Activated naive CD4-positive, alpha-beta T cell treated with anti-CD3 and anti-CD28 coated beads for 36 hours (primary cell): ENCODE measurements at regions of chr12 and their contacts with region 1.

Region 1: DNA sequence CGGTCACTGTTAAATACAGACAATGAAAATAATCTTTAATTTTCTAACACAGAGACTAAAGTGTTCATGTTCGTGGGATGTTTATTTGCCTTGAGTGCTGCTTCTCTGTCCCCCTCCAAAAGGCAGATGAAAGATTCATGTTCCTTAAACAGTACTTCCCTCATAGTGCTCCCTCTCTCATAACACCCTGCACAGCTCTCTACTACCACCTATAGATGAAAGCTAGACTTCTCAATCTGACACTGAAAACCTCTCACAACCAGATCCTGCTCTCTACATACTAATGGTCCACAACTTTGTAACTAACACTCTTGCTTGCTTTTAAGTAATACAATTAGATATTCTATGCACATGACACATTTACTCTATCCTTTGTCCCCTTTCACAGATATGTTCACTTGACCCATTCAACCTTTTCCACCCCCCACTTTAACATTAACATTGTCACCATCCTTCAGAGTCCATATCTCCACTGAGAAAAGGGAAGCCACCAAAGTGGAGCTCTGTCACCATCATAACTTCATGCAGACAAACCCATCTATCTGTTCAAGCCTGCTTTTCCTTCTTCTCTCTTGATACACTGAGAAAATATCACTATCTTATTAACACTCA is 266.4 kb upstream of the USP15 start:
- DNase-seq: no peak
- H3K4me3 Mint-ChIP-seq: no peak overlapping the region
- H3K27ac Mint-ChIP-seq: no peak overlapping the region
- H3K4me1 Mint-ChIP-seq: no peaks in the 10 kb centered on the region
- H3K27me3 Mint-ChIP-seq: no peaks in the 10 kb centered on the region

Region 2: DNA sequence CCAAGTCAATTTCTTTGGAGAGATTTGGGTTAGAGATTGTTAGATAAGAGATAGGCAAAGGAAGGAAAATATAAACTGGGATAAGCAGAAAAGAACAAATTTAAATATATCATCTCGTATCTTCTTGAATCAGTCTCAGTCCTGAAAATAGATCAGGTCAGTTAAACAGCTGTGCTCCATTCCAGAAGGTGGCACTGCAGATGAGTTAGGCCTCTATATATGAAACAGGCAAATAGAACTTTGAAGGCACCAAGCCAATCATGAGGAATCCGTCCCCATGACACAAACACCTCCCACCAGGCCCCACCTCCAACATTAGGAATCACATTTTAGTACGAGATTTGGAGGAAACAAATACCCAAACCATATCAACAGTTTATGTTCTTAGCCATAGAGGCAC is 339.1 kb before region 1 on chr12:
- CTCF ChIA-PET with region 1: no interaction called
- intact Hi-C with region 1: loop called (anchors 5 kb)
- DNase-seq: peak; percentile 7
- H3K4me3 Mint-ChIP-seq: no peak overlapping the region
- H3K27ac Mint-ChIP-seq: no peak overlapping the region
- H3K4me1 Mint-ChIP-seq: no peaks in the 10 kb centered on the region
- H3K27me3 Mint-ChIP-seq: no peaks in the 10 kb centered on the region

Region 3: GRCh38 chr12:61916831-61917230 is 77.0 kb before region 1 on chr12:
- CTCF ChIA-PET with region 1: no interaction called
- intact Hi-C with region 1: no loop called
- DNase-seq: no peak
- H3K4me3 Mint-ChIP-seq: no peak overlapping the region
- H3K27ac Mint-ChIP-seq: no peak overlapping the region
- H3K4me1 Mint-ChIP-seq: no peaks in the 10 kb centered on the region
- H3K27me3 Mint-ChIP-seq: no peaks in the 10 kb centered on the region

Region 4: GRCh38 chr12:62021811-62022210 is 28.0 kb after region 1 on chr12:
- CTCF ChIA-PET with region 1: no interaction called
- intact Hi-C with region 1: no loop called
- DNase-seq: no peak
- H3K4me3 Mint-ChIP-seq: no peak overlapping the region
- H3K27ac Mint-ChIP-seq: no peak overlapping the region
- H3K4me1 Mint-ChIP-seq: no peaks in the 10 kb centered on the region
- H3K27me3 Mint-ChIP-seq: no peaks in the 10 kb centered on the region